ENCODE measurements at regions of chr5 and their contacts with region 1.

Region 1: GRCh38 chr5:56270568-56271392 is 37.6 kb upstream of the ANKRD55 start:
- DNase-seq: peak; percentile 92
- H3K4me3 Mint-ChIP-seq: peak overlapping the region; percentile 27
- H3K27ac Mint-ChIP-seq: peak overlapping the region; percentile 20
- H3K4me1 Mint-ChIP-seq: peaks cover 27% of the 10 kb centered on the region
- H3K27me3 Mint-ChIP-seq: no peaks in the 10 kb centered on the region

Region 2: DNA sequence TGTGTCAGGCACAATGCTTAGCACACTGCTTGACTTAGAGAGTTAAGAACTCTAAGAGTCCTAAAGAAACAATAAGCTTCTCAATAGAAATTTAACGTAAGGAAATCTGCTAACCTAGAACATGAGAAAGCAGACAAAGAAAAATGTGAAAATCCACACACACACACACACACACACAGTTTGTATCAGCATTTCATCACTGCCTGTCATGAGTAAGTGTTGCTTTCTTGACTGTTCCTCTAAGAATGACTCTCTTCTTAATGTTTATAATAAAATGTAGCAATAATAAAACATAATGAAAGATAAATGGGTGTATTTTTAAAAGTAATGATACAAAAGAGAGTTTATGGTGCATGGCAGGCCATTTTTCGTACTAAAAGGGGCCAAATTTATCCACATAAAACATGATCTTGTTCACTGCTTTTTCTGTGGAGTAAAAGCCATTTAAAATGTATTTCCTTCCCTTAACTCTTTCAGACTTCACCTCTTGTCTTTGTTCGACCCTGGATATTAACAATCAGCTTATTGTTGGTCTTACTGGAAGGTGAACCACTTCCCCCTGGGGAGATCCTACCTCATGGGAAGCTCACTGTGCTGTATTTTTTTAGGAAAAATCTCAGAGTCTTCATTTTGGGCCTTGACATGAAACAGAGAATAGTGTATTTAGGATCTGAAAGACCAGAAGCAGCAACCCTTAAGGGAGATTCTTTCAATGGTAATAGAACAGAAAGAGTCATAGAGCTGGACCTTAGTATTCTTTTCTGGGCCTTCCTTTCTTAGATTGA is 69.6 kb after region 1 on chr5:
- intact Hi-C with region 1: no loop called
- DNase-seq: no peak
- H3K4me3 Mint-ChIP-seq: no peak overlapping the region
- H3K27ac Mint-ChIP-seq: no peak overlapping the region
- H3K4me1 Mint-ChIP-seq: peaks cover 14% of the 10 kb centered on the region
- H3K27me3 Mint-ChIP-seq: no peaks in the 10 kb centered on the region

Region 3: GRCh38 chr5:56352808-56353590 is 82.2 kb after region 1 on chr5:
- intact Hi-C with region 1: loop called (anchors 2 kb)
- DNase-seq: no peak
- H3K4me3 Mint-ChIP-seq: peak overlapping the region; percentile 19
- H3K27ac Mint-ChIP-seq: peak overlapping the region; percentile 82
- H3K4me1 Mint-ChIP-seq: peaks cover 16% of the 10 kb centered on the region
- H3K27me3 Mint-ChIP-seq: no peaks in the 10 kb centered on the region

Region 4: DNA sequence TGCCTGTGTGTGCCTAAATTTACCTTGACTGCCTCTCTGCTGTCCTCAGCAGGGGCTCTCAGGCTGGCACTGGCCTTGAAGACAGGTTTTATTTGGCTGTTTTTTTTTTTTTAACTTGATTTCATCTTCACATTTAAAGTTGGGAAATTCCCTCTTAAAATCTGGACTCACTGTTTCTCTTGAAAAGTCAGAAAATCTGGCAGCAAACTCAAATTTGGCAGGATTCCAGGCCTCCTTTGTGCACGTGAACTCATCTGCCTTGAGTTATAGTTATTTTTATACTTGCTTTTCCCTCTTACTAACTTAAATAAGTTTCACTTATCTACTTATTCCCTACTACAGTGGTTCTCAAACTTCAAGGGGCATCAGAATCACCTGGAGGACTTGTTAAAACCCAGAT is 426.1 kb after region 1 on chr5:
- intact Hi-C with region 1: loop called (anchors 10 kb)
- DNase-seq: no peak
- H3K4me3 Mint-ChIP-seq: no peak overlapping the region
- H3K27ac Mint-ChIP-seq: no peak overlapping the region
- H3K4me1 Mint-ChIP-seq: peaks cover 77% of the 10 kb centered on the region
- H3K27me3 Mint-ChIP-seq: no peaks in the 10 kb centered on the region

Region 5: GRCh38 chr5:56900858-56901578 is 630.2 kb after region 1 on chr5:
- intact Hi-C with region 1: loop called (anchors 5 kb)
- DNase-seq: peak; percentile 84
- H3K4me3 Mint-ChIP-seq: no peak overlapping the region
- H3K27ac Mint-ChIP-seq: no peak overlapping the region
- H3K4me1 Mint-ChIP-seq: peaks cover 2% of the 10 kb centered on the region
- H3K27me3 Mint-ChIP-seq: peaks cover 16% of the 10 kb centered on the region